ENCODE measurements at regions of chr10 and their contacts with region 1.

Region 1: GRCh38 chr10:73386583-73386982 is 27.3 kb downstream of the ANXA7 start:
- DNase-seq: no peak
- H3K4me3 ChIP-seq: no peak overlapping the region
- H3K27ac ChIP-seq: no peak overlapping the region
- H3K4me1 ChIP-seq: no peaks in the 10 kb centered on the region
- H3K27me3 ChIP-seq: no peaks in the 10 kb centered on the region
- CTCF ChIP-seq: no peak

Region 2: DNA sequence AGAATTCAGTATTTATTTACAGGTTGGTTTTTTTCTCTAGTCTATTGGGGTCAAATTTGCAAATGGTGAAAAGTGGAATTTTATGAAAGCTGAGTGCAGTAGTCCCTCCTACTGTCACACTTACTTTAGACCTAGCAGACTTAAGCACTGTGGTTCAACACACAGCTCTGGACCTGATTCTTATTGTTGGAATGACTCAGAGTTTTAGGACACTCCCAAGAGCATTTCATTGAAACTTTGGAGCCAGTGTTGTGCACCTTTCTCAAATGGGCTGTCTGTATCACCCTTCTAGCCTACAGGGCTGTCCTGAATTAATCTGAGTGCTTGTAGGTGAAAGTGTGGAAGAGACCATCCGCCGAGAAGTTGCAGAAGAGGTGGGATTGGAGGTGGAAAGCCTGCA is 260.2 kb before region 1 on chr10:
- CTCF ChIA-PET with region 1: no interaction called
- POLR2A ChIA-PET with region 1: no interaction called
- intact Hi-C with region 1: no loop called
- DNase-seq: no peak
- H3K4me3 ChIP-seq: no peak overlapping the region
- H3K27ac ChIP-seq: no peak overlapping the region
- H3K4me1 ChIP-seq: peaks cover 2% of the 10 kb centered on the region
- H3K27me3 ChIP-seq: no peaks in the 10 kb centered on the region
- CTCF ChIP-seq: no peak

Region 3: DNA sequence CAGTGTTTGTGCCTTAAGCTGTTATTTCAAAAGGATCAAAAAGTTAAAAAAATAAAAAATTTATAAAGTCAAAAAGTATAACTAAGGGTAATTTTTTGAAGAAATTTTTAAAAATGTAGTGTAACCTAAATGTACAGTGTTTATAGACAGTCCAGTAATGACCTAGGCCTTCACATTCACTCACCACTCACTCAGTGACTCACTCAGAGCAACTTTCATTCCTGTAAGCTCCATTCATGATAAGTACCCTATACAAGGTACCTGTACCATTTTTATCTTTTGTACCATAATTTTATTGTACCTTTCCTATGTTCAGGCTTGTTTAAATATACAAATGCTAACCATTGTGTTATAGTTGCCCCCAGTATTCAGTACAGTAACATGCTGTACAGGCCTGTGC is 161.1 kb before region 1 on chr10:
- CTCF ChIA-PET with region 1: no interaction called
- POLR2A ChIA-PET with region 1: no interaction called
- intact Hi-C with region 1: no loop called
- DNase-seq: no peak
- H3K4me3 ChIP-seq: no peak overlapping the region
- H3K27ac ChIP-seq: no peak overlapping the region
- H3K4me1 ChIP-seq: no peaks in the 10 kb centered on the region
- H3K27me3 ChIP-seq: no peaks in the 10 kb centered on the region
- CTCF ChIP-seq: no peak

Region 4: GRCh38 chr10:73439605-73440312 is 53.2 kb after region 1 on chr10:
- CTCF ChIA-PET with region 1: interaction called, 10 read pairs
- POLR2A ChIA-PET with region 1: no interaction called
- intact Hi-C with region 1: no loop called
- DNase-seq: no peak
- H3K4me3 ChIP-seq: no peak overlapping the region
- H3K27ac ChIP-seq: no peak overlapping the region
- H3K4me1 ChIP-seq: no peaks in the 10 kb centered on the region
- H3K27me3 ChIP-seq: no peaks in the 10 kb centered on the region
- CTCF ChIP-seq: no peak

Measured in A673 (cell line).